Left colon (tissue), 2 donors: ENCODE measurements at regions of chr11 and their contacts with region 1.

Region 1: DNA sequence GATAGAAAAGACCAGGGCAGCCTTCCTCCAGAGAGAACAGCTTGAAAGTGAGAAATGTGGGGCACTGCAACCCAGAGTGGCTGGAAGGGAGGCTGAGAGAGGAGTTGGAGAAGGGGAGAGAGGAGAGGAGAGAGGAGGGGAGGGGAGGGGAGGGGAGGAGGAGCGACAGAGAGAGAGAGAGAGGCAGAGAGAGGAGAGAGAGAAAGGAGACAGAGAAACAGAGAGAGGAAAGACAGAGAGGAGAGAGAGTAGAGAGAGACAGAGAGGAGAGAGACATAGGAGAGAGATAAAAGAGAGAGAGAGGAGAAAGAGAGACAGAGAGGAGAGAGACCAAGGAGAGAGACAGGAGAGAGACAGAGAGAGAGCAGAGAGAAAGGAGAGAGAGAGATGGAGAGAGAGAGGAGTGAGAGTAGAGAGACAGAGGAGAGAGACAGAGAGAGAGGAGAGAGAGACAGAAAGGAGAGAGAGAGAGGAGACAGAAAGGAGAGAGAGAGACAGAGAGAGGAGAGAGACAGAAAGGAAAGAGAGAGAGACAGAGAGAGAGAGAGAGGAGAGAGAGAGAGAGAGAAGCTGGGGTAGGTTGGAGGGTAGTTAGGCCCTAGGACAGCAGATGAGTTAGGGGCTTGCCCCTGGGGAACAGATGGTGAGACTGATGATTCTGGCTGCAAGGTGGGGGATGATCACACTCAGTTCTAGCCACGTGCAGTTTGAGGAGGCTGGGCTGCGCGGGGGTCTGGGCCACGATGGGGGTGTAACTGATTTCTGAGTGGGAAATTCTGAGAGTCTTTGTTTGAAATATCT is 8.5 kb upstream of the SCYL1 start:
- DNase-seq: no peak
- ATAC-seq: no peak

Region 2: DNA sequence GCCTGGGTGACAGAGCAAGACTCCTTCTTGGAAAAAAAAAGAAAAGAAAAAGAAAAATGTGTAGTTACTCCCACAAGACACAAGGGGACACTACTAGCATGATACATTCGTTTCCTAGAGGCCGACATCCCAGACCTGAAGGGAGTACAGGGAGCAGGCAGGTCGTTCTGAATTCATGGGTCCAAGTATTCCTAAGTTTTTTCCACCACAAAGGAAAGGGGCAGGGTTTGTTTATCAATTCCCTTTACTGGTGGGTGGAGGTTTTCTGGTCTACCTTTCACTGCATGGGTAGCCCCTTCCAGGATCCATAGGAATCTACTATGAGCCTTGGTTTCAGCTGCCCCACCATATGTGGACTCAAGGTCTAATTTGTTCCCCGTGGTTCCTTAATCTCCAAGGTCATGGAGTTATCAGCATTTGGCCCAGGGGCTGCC is 150.0 kb before region 1 on chr11:
- intact Hi-C with region 1: loop called (anchors 10 kb)
- DNase-seq: no peak
- ATAC-seq: peak; percentile 89

Region 3: DNA sequence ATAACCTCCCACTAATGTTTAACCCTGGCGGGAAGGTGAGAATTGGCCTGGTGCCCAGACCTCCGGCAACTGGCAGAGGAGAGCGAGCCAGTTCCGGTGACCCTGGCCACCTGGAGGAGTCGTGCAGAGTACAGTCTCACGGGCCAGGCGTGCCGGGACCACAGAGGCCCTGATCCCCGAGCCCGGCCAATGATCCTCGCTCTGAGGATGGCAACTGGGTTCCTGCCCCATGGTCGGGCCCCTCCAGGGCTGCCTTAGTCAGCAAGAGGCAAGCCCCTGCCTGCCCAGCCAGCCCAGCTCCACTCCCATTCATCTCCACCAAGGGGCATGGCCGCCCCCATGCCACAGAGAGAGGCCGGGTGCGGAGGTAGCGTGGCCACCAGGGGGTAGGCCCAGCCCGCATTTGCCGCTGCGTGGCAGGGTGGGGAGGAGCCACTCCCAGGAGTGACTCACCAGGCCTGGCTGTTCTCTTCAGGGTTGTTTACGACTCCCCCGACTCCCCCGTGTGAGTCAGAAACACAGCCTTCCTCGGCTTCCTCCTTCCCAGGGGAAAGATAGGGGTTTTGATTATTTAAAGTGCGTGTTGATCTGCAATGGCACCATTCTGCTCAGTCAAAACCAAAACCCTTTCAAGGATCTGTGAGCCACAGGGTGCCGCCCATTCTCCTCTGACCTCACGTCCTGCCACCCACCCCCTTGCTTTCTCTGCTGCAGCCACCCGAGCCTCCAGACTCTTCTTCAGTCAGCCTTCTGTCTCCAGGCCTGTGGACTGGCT is 134.1 kb before region 1 on chr11 and contains the start of gene SLC25A45:
- intact Hi-C with region 1: loop called in 1 of 2 experiments (anchors 10 kb)
- DNase-seq: peak; percentile 90 to 95
- ATAC-seq: peak; percentile 82
- total RNA-seq, gene SLC25A45: 5.8 to 8.4 TPM

Region 4: DNA sequence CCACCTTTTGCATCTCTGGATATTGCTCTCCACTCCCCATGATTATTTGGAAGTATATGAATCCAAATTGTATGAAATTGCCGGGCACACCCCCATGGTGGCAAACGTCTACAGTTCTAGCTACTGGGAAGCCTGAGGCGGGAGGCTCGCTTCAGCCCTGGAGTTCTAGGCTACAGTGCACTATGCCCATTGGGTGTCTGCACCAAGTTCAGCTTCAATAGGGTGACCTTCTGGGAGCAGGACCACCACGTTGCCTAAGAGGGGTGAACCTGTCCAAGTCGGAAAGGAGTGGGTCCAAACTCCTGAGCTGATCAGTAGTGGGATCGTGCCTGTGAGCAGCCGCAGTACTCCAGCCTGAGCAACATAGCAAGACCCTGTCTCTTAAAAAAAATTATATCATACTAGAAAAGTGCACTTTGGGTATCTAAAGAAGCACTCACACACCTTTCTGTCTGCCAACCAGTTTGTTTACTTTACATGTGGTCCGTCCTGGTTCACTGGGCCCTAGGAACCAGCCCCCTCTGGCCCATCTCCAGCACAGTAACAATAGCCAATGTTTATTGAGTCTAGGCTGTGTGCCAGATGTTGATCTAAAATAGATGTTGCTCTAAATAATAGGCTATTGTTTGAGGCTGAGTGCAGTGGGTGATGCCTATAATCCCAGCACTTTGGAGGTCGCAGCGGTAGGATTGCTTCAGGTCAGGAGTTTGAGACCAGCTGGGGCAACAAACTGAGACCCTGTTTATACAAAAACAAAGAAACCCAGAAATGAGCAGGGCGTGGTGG is 179.3 kb after region 1 on chr11:
- intact Hi-C with region 1: no loop called
- DNase-seq: peak; percentile 76 to 86
- ATAC-seq: peak; percentile 80